GM12878 (cell line): ENCODE measurements at regions of chr5 and their contacts with region 1.

Region 1: GRCh38 chr5:151164686-151165392 is 7.3 kb upstream of the ANXA6 start:
- DNase-seq: peak; percentile 83
- ATAC-seq: peak; percentile 98
- H3K4me3 ChIP-seq: no peak overlapping the region
- H3K27ac ChIP-seq: no peak overlapping the region
- H3K4me1 ChIP-seq: peaks cover 6% of the 10 kb centered on the region; the same call in 1 of the 2 replicates
- H3K27me3 ChIP-seq: no peaks in the 10 kb centered on the region
- CTCF ChIP-seq: peak; percentile 87 to 98 (median 92); a peak in 5 of 6 replicates
- EP300 ChIP-seq: no peak
- POLR2A ChIP-seq: no peak
- RAD21 ChIP-seq: peak; percentile 100

Region 2: GRCh38 chr5:150801117-150801927 is 363.5 kb before region 1 on chr5:
- CTCF ChIA-PET with region 1: interaction called, 33 read pairs
- POLR2A ChIA-PET with region 1: no interaction called
- RAD21 ChIA-PET with region 1: interaction called, 12 read pairs
- SMC1A ChIA-PET with region 1: interaction called, 10 read pairs
- in situ Hi-C with region 1: loop called (anchors 10 kb)
- intact Hi-C with region 1: loop called (anchors 2 kb)
- DNase-seq: no peak
- ATAC-seq: peak; percentile 83
- H3K4me3 ChIP-seq: no peak overlapping the region
- H3K27ac ChIP-seq: no peak overlapping the region
- H3K4me1 ChIP-seq: no peaks in the 10 kb centered on the region
- H3K27me3 ChIP-seq: no peaks in the 10 kb centered on the region
- CTCF ChIP-seq: peak; percentile 49 to 60 (median 52); a peak in 5 of 6 replicates
- EP300 ChIP-seq: no peak
- POLR2A ChIP-seq: no peak
- RAD21 ChIP-seq: peak; percentile 61

Region 3: GRCh38 chr5:151068433-151069197 is 96.2 kb before region 1 on chr5:
- CTCF ChIA-PET with region 1: interaction called, 14 read pairs
- POLR2A ChIA-PET with region 1: no interaction called
- RAD21 ChIA-PET with region 1: interaction called, 3 read pairs
- SMC1A ChIA-PET with region 1: interaction called, 5 read pairs
- in situ Hi-C with region 1: no loop called
- intact Hi-C with region 1: no loop called
- DNase-seq: no peak
- ATAC-seq: peak; percentile 78
- H3K4me3 ChIP-seq: peak overlapping the region; percentile 6; the same call in 1 of the 2 replicates
- H3K27ac ChIP-seq: peak overlapping the region; percentile 65
- H3K4me1 ChIP-seq: peaks cover 77% of the 10 kb centered on the region
- H3K27me3 ChIP-seq: no peaks in the 10 kb centered on the region
- CTCF ChIP-seq: no peak
- EP300 ChIP-seq: peak in 1 of 2 experiments; percentile 16; a peak in 1 of 4 replicates
- POLR2A ChIP-seq: no peak; the same call in none of the 2 replicates
- RAD21 ChIP-seq: no peak

Region 4: GRCh38 chr5:151141535-151141934 is 23.3 kb before region 1 on chr5:
- CTCF ChIA-PET with region 1: interaction called, 1,107 read pairs
- POLR2A ChIA-PET with region 1: interaction called, 6 read pairs
- RAD21 ChIA-PET with region 1: interaction called, 33 read pairs
- SMC1A ChIA-PET with region 1: interaction called, 1,132 read pairs
- in situ Hi-C with region 1: no loop called
- intact Hi-C with region 1: no loop called
- DNase-seq: no peak
- ATAC-seq: peak; percentile 90
- H3K4me3 ChIP-seq: peak overlapping the region; percentile 52
- H3K27ac ChIP-seq: peak overlapping the region; percentile 61
- H3K4me1 ChIP-seq: peaks cover 60% of the 10 kb centered on the region
- H3K27me3 ChIP-seq: no peaks in the 10 kb centered on the region
- CTCF ChIP-seq: no peak
- EP300 ChIP-seq: no peak
- POLR2A ChIP-seq: peak; percentile 67
- RAD21 ChIP-seq: 0 out of 2 replicates have a peak, but pooled peaks have one; percentile 13

Region 5: DNA sequence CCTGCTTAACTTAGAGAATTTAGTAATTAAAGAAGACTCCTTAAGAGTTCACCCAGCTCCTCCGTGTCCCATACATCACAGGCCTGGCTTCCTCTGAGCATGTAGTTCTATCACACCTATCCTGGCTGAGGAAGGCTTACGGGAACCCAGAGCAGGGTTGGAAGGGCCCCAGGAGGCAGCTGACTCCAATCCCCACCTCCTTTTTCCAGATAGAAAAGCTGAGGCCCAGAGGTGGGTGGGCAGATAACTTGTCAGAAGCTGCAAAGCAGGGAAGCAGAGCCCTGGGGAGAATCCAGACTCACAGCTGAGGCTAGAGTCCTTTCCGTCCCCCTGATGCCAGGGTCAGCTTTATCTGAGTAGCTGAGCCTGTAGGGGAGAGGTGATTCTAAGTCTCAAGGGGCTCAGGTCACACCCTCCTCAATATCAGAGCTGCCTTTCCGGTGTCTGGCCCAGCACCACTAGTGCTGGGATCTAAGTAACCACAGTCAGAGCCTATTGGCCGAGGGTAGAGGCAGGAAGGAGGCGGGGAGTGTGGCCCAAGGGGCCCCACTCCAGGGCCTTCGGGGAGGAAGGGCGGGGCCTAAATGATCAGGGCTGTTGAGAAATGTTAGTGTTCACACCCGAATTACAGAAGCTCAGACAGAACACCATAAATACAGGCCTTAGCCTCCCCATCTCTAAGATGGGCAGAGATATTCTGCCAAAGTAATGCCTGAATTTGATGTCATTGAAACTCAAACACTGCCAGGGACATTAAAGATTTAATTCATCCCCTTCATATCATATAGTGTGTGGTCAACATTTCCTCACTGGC is 49.2 kb after region 1 on chr5:
- CTCF ChIA-PET with region 1: interaction called, 23 read pairs
- POLR2A ChIA-PET with region 1: interaction called, 7 read pairs
- RAD21 ChIA-PET with region 1: interaction called, 39 read pairs
- SMC1A ChIA-PET with region 1: interaction called, 78 read pairs
- in situ Hi-C with region 1: no loop called
- intact Hi-C with region 1: no loop called
- DNase-seq: peak; percentile 93
- ATAC-seq: peak; percentile 83
- H3K4me3 ChIP-seq: peak overlapping the region; percentile 74
- H3K27ac ChIP-seq: peak overlapping the region; percentile 99
- H3K4me1 ChIP-seq: peaks cover 57% of the 10 kb centered on the region
- H3K27me3 ChIP-seq: no peaks in the 10 kb centered on the region
- CTCF ChIP-seq: no peak
- EP300 ChIP-seq: peak in 1 of 2 experiments; percentile 64; a peak in 1 of 4 replicates
- POLR2A ChIP-seq: peak; percentile 93
- RAD21 ChIP-seq: no peak

Region 6: DNA sequence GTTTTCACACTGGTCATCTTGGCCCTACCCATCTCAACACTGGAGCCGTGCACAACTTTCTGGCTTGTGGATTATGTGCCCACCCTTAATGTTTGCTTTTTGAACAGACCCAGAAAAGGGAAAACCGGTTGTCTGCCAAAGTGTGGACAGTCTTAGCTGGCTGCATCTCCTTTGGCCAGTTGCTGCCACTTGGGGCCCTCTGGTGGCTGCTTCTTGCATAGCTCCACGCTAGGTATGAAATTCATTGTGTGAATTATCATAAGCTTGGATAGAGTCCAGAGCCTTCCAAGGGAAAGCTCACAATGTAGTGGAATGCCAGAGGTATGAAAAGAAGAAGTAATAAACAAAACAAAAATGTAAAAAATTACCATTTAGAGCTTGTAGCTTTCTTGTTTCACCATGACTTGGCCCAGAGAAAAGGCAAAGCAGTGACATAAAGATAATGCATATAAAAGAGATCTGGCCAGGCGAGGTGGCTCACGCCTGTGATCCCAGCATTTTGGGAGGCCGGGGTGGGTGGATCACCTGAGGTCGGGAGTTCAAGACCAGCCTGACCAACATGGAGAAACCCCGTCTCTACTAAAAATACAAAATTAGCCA is 151.3 kb after region 1 on chr5:
- CTCF ChIA-PET with region 1: interaction called, 41 read pairs
- POLR2A ChIA-PET with region 1: no interaction called
- RAD21 ChIA-PET with region 1: interaction called, 15 read pairs
- SMC1A ChIA-PET with region 1: interaction called, 9 read pairs
- in situ Hi-C with region 1: no loop called
- intact Hi-C with region 1: loop called (anchors 5 kb)
- DNase-seq: peak; percentile 7
- ATAC-seq: peak; percentile 95
- H3K4me3 ChIP-seq: no peak overlapping the region
- H3K27ac ChIP-seq: no peak overlapping the region
- H3K4me1 ChIP-seq: no peaks in the 10 kb centered on the region
- H3K27me3 ChIP-seq: no peaks in the 10 kb centered on the region; a peak in 1 of 4 replicates
- CTCF ChIP-seq: peak; percentile 93 to 95 (median 94); a peak in 5 of 6 replicates
- EP300 ChIP-seq: no peak
- POLR2A ChIP-seq: no peak
- RAD21 ChIP-seq: peak; percentile 86